WTC11 (cell line): ENCODE measurements at regions of chr1 and their contacts with region 1.

Region 1: GRCh38 chr1:36149237-36149972 is at the start of gene TRAPPC3:
- DNase-seq: peak; percentile 100
- ATAC-seq: peak; percentile 92
- H3K4me3 Mint-ChIP-seq: peak within 1 kb of the TSS; percentile 90
- H3K27ac Mint-ChIP-seq: peak within 1 kb of the TSS; percentile 97
- H3K4me1 Mint-ChIP-seq: peaks cover 33% of the 10 kb centered on the region
- H3K27me3 Mint-ChIP-seq: peaks cover 27% of the 10 kb centered on the region
- CTCF ChIP-seq: peak; percentile 37; the same call in 1 of the 2 replicates
- total RNA-seq, gene TRAPPC3: 48.9 to 52.5 TPM (median 52.0 TPM) in 3 replicates

Region 2: GRCh38 chr1:36099681-36100341 is 49.6 kb before region 1 on chr1:
- CTCF ChIA-PET with region 1: interaction called, 28 read pairs
- POLR2A ChIA-PET with region 1: interaction called, 4 read pairs
- DNase-seq: peak; percentile 92
- ATAC-seq: peak; percentile 76
- H3K4me3 Mint-ChIP-seq: no peak overlapping the region
- H3K27ac Mint-ChIP-seq: no peak overlapping the region
- H3K4me1 Mint-ChIP-seq: peaks cover 16% of the 10 kb centered on the region
- H3K27me3 Mint-ChIP-seq: no peaks in the 10 kb centered on the region
- CTCF ChIP-seq: peak; percentile 76

Region 3: GRCh38 chr1:36160949-36161485 is 11.6 kb after region 1 on chr1:
- CTCF ChIA-PET with region 1: interaction called, 74 read pairs
- POLR2A ChIA-PET with region 1: interaction called, 19 read pairs
- DNase-seq: peak; percentile 71
- ATAC-seq: peak; percentile 76
- H3K4me3 Mint-ChIP-seq: peak overlapping the region; percentile 67
- H3K27ac Mint-ChIP-seq: peak overlapping the region; percentile 88
- H3K4me1 Mint-ChIP-seq: peaks cover 41% of the 10 kb centered on the region
- H3K27me3 Mint-ChIP-seq: no peaks in the 10 kb centered on the region
- CTCF ChIP-seq: no peak

Region 4: GRCh38 chr1:36187800-36188593 is 38.6 kb after region 1 on chr1:
- CTCF ChIA-PET with region 1: interaction called, 213 read pairs
- POLR2A ChIA-PET with region 1: interaction called, 25 read pairs
- DNase-seq: peak; percentile 86
- ATAC-seq: peak; percentile 94
- H3K4me3 Mint-ChIP-seq: peak overlapping the region; percentile 56
- H3K27ac Mint-ChIP-seq: peak overlapping the region; percentile 94
- H3K4me1 Mint-ChIP-seq: peaks cover 15% of the 10 kb centered on the region
- H3K27me3 Mint-ChIP-seq: no peaks in the 10 kb centered on the region
- CTCF ChIP-seq: peak; percentile 70

Region 5: DNA sequence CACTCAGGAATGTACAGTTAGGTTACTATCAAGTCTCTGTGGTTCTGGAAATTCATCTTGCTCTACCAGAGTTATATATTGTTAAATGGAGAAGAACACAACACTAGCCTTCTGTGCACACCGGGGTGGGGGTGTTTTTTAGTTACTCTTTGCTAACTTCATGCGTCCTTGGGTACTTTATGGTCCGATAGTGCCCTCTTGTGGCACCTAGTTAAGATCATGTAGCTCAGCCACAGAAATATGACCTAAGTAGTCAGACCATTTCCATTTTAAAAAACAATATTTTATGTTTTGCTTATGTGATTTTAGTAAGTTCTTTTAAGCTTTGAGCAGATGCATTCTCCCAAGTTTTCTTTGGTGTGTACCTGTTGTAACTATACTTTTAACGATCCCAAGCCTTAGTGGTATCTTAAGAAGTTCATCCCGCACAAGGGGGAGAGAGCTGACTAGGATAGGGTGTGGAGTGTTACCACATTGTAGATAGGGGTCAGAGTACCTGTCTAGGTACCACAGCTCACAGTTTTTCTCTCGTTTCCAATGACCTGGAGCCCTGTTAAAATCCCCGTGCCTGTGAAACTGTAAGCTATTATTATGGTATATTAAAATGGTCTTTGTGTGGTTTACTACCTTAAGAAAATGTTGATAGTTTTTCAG is 136.2 kb after region 1 on chr1:
- CTCF ChIA-PET with region 1: interaction called, 54 read pairs
- POLR2A ChIA-PET with region 1: interaction called, 4 read pairs
- DNase-seq: peak; percentile 44
- ATAC-seq: peak; percentile 71
- H3K4me3 Mint-ChIP-seq: no peak overlapping the region
- H3K27ac Mint-ChIP-seq: peak overlapping the region; percentile 57; the same call in 1 of the 2 replicates
- H3K4me1 Mint-ChIP-seq: no peaks in the 10 kb centered on the region
- H3K27me3 Mint-ChIP-seq: no peaks in the 10 kb centered on the region
- CTCF ChIP-seq: peak; percentile 55

Region 6: DNA sequence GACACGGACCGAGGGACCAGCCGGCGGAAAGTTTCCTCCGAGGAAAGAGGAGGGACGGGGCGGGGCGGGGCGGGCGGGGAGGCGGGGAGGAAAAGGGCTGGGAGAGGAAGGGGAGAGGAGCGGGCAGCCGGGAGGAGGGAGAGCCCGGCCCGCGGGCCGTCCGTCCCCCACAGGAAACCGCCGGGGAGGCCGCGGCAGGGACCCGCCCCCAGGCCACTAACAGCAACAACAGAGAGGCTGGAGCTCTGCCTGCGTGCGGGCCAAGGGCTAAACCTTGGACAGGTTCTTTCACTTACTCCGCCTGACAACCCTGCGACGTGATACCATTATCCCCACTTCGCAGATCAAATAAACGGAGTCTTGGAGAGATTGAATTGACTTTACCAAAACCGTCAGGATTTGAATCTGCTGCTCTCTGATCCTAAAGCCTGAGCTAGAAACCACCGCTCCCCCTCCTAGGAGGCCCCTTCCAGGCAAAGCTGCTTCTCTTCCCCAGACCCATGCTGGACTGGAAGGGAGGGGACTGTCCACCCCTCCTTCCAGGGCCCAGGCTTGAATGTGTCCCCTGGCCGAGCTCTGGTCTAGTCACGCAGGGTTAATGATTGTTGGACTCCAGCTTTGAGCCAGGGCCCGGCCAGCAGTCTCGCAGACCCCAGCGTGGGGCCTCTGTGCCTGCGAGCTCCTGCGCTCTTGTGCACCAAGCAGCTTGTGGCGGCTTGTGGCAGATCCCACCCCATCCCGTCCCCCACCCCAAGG is 174.4 kb after region 1 on chr1 and contains the start of gene EVA1B:
- CTCF ChIA-PET with region 1: interaction called, 12 read pairs
- POLR2A ChIA-PET with region 1: interaction called, 6 read pairs
- DNase-seq: peak; percentile 74
- ATAC-seq: peak; percentile 15
- H3K4me3 Mint-ChIP-seq: peak within 1 kb of the TSS; percentile 76
- H3K27ac Mint-ChIP-seq: peak within 1 kb of the TSS; percentile 65
- H3K4me1 Mint-ChIP-seq: peaks cover 25% of the 10 kb centered on the region
- H3K27me3 Mint-ChIP-seq: peaks cover 10% of the 10 kb centered on the region
- CTCF ChIP-seq: no peak
- total RNA-seq, gene EVA1B: 32.0 to 45.2 TPM (median 41.5 TPM) in 3 replicates